Panc1 (cell line): ENCODE measurements at regions of chr7 and their contacts with region 1.

Region 1: DNA sequence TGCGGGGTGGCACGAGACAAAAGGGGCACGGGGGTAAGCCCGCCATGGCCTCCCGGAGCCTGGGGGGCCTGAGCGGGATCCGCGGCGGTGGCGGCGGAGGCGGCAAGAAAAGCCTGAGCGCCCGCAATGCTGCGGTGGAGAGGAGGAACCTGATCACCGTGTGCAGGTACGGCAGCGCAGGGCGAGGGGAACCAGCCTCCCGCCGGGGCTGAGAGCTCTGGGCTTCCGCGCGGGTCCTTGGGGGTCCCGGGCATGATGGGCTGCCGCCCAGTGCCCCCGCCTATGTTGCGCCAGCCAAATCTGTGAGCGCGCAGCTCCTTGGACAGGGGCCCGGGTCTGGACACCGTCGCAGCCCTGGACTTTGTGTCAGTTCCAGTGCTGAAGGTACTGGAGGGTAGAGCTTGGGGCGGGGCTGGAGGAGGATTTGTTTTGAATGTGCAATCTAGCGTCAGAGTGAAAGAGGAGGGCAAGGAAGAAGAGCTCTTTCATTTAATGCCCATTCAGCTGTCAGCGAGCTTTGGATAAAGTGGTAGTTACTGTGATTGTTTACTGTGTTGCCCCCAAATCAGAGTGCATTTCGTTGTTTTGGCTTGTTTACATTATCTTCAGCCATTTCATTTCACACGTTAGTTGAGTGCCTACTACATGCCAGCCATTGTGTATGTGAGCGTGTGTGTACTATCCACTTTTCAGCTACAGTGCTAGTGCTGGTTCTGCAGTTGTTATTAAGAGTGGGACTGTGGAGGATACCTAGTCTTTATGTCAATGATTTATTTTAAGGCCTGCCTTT is 777 bp downstream of the RUNDC3B start:
- DNase-seq: no peak
- ATAC-seq: 0 out of 2 replicates have a peak, but pooled peaks have one; percentile 39
- H3K4me3 ChIP-seq: peak overlapping the region; percentile 59 to 68
- H3K27ac ChIP-seq: no peak overlapping the region
- H3K4me1 ChIP-seq: no peaks in the 10 kb centered on the region
- H3K27me3 ChIP-seq: peaks cover 9% of the 10 kb centered on the region
- CTCF ChIP-seq: no peak

Region 2: GRCh38 chr7:87580636-87581035 is 48.3 kb before region 1 on chr7:
- CTCF ChIA-PET with region 1: no interaction called
- POLR2A ChIA-PET with region 1: no interaction called
- in situ Hi-C with region 1: no loop called
- intact Hi-C with region 1: no loop called
- DNase-seq: no peak
- ATAC-seq: no peak
- H3K4me3 ChIP-seq: no peak overlapping the region
- H3K27ac ChIP-seq: no peak overlapping the region
- H3K4me1 ChIP-seq: no peaks in the 10 kb centered on the region
- H3K27me3 ChIP-seq: no peaks in the 10 kb centered on the region
- CTCF ChIP-seq: no peak

Region 3: GRCh38 chr7:87592300-87592699 is 36.7 kb before region 1 on chr7:
- CTCF ChIA-PET with region 1: no interaction called
- POLR2A ChIA-PET with region 1: no interaction called
- in situ Hi-C with region 1: no loop called
- intact Hi-C with region 1: no loop called
- DNase-seq: no peak
- ATAC-seq: no peak
- H3K4me3 ChIP-seq: no peak overlapping the region
- H3K27ac ChIP-seq: no peak overlapping the region
- H3K4me1 ChIP-seq: no peaks in the 10 kb centered on the region
- H3K27me3 ChIP-seq: peaks cover 2% of the 10 kb centered on the region; the same call in 1 of the 2 replicates
- CTCF ChIP-seq: no peak

Region 4: DNA sequence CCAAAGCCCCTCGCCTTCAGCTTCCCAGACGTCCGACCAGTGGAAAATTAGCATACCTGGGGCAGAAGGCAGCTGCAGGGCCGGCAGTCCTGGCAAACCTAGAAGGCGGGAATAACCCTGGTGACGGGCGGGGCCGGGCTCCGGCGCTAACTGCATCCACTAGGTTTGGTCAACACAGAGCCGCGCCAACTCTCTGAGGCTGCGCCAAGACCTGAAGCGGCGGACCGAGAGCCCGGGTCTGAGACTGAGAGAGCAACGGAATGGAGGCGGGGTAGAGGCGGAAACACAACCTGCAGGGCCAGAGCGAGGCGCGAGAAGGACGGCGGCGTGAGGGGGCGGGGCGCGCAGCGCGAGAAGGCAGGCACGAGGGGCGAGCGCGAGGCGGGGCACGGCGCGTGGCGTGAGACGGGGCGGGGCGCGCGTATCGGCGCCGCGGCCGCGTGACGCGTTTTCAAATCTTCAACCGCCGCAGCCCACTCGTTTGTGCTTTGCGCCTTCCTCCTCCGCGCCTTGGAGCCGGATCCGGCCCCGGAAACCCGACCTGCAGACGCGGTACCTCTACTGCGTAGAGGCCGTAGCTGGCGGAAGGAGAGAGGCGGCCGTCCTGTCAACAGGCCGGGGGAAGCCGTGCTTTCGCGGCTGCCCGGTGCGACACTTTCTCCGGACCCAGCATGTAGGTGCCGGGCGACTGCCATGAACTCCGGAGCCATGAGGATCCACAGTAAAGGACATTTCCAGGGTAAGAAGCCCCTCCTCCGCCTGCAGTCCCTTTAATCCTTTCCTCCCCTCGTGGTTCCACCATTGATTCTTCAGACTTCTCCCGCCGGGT is 247.3 kb after region 1 on chr7 and contains the starts of genes DBF4 and SLC25A40:
- CTCF ChIA-PET with region 1: no interaction called
- POLR2A ChIA-PET with region 1: no interaction called
- in situ Hi-C with region 1: no loop called
- intact Hi-C with region 1: loop called (anchors 5 kb)
- DNase-seq: peak; percentile 78
- ATAC-seq: peak; percentile 96
- H3K4me3 ChIP-seq: peak within 1 kb of the TSS; percentile 64 to 93
- H3K27ac ChIP-seq: peak within 1 kb of the TSS; percentile 94
- H3K4me1 ChIP-seq: peaks cover 19% of the 10 kb centered on the region
- H3K27me3 ChIP-seq: no peaks in the 10 kb centered on the region
- CTCF ChIP-seq: no peak
- total RNA-seq, gene DBF4: 48.8 TPM
- total RNA-seq, gene SLC25A40: 43.7 TPM